Activated naive CD4-positive, alpha-beta T cell treated with anti-CD3 and anti-CD28 coated beads for 36 hours (primary cell): ENCODE measurements at regions of chr4 and their contacts with region 1.

Region 1: GRCh38 chr4:40114206-40114605 is 57.6 kb downstream of the N4BP2 start:
- DNase-seq: no peak
- H3K4me3 Mint-ChIP-seq: no peak overlapping the region
- H3K27ac Mint-ChIP-seq: no peak overlapping the region
- H3K4me1 Mint-ChIP-seq: peaks cover 4% of the 10 kb centered on the region
- H3K27me3 Mint-ChIP-seq: no peaks in the 10 kb centered on the region

Region 2: DNA sequence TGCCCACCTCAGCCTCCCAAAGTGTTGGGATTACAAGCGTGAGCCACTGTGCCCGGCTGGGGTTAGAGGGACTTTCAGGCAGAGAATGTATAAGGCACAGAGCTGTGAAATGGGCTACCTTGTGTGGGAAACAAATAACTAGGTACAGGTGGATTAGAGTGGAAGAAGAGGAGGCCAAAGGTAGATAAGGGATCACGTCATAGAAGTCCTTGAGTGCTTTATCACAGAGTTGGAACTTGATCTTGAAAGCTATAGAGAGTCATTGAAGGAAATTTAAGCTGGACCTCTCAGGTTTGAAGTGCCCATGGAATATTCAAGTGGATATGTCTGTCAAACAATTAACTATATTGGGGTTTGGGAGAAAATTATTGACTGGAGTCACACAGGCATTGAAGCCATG is 49.2 kb before region 1 on chr4:
- CTCF ChIA-PET with region 1: no interaction called
- intact Hi-C with region 1: loop called (anchors 5 kb)
- DNase-seq: no peak
- H3K4me3 Mint-ChIP-seq: no peak overlapping the region
- H3K27ac Mint-ChIP-seq: no peak overlapping the region
- H3K4me1 Mint-ChIP-seq: peaks cover 47% of the 10 kb centered on the region
- H3K27me3 Mint-ChIP-seq: no peaks in the 10 kb centered on the region

Region 3: GRCh38 chr4:40099010-40099409 is 15.2 kb before region 1 on chr4:
- CTCF ChIA-PET with region 1: no interaction called
- intact Hi-C with region 1: loop called (anchors 1 kb)
- DNase-seq: no peak
- H3K4me3 Mint-ChIP-seq: no peak overlapping the region
- H3K27ac Mint-ChIP-seq: no peak overlapping the region
- H3K4me1 Mint-ChIP-seq: peaks cover 3% of the 10 kb centered on the region
- H3K27me3 Mint-ChIP-seq: no peaks in the 10 kb centered on the region